ENCODE measurements at regions of chr1 and their contacts with region 1.

Region 1: GRCh38 chr1:45884700-45885099 is 81.3 kb downstream of the MAST2 start:
- DNase-seq: peak in 2 of 4 experiments; percentile 25 to 50
- ATAC-seq: peak; percentile 86
- H3K4me3 ChIP-seq: no peak overlapping the region
- H3K27ac ChIP-seq: peak overlapping the region; percentile 30; the same call in 2 of the 3 replicates
- H3K4me1 ChIP-seq: peaks cover 0 to 7% of the 10 kb centered on the region in 2 experiments; a peak in 2 of 5 replicates
- H3K27me3 ChIP-seq: no peaks in the 10 kb centered on the region
- CTCF ChIP-seq: no peak
- EP300 ChIP-seq: peak; percentile 25; the same call in 1 of the 2 replicates
- POLR2A ChIP-seq: no peak
- RAD21 ChIP-seq: no peak

Region 2: GRCh38 chr1:45512641-45513054 is 372.1 kb before region 1 on chr1:
- CTCF ChIA-PET with region 1: no interaction called
- POLR2A ChIA-PET with region 1: no interaction called
- in situ Hi-C with region 1: no loop called
- intact Hi-C with region 1: loop called (anchors 5 kb)
- DNase-seq: peak; percentile 57 to 88 (median 67)
- ATAC-seq: peak; percentile 78
- H3K4me3 ChIP-seq: no peak overlapping the region
- H3K27ac ChIP-seq: no peak overlapping the region
- H3K4me1 ChIP-seq: no peaks in the 10 kb centered on the region; a peak in 1 of 5 replicates
- H3K27me3 ChIP-seq: no peaks in the 10 kb centered on the region
- CTCF ChIP-seq: peak; percentile 84 to 89 (median 86)
- EP300 ChIP-seq: no peak
- POLR2A ChIP-seq: no peak
- RAD21 ChIP-seq: peak; percentile 87 to 95

Region 3: DNA sequence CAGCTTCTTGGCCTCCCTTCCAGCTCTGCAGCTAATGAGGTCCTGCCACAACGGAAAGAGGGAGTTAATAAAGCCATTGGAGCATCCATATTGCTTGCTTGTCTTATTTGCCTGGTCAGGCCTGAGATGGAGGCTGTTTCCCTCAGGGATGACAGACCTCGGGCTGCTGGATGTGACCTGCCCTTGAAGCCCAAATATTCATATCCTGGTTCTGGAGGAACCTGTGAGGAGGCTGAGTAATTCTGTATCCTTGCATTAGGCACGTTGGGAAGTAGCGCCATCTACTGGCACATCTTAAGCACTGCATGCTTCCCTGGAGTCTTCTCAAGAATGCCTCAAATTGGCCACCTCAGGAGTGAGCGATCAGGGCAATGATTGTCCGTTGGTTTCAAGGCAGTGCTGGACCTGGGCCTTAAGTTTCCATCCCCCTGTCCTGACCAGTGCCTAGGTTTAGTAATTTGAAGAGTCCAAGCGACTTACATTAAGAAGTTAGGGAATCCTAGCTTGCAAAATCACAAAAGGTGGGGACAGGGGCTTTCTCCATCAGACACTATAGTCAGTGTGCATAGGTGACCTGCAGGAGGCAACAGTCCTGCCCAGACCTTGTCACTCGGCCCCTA is 314.6 kb before region 1 on chr1:
- CTCF ChIA-PET with region 1: no interaction called
- POLR2A ChIA-PET with region 1: no interaction called
- in situ Hi-C with region 1: no loop called
- intact Hi-C with region 1: loop called (anchors 1 kb)
- DNase-seq: peak; percentile 67 to 86 (median 74)
- ATAC-seq: peak; percentile 87
- H3K4me3 ChIP-seq: no peak overlapping the region
- H3K27ac ChIP-seq: no peak overlapping the region
- H3K4me1 ChIP-seq: peaks cover 11 to 22% of the 10 kb centered on the region in 2 experiments
- H3K27me3 ChIP-seq: no peaks in the 10 kb centered on the region
- CTCF ChIP-seq: peak; percentile 95 to 99 (median 98)
- EP300 ChIP-seq: 0 out of 2 replicates have a peak, but pooled peaks have one; percentile 8
- POLR2A ChIP-seq: no peak
- RAD21 ChIP-seq: peak; percentile 94 to 97

Region 4: DNA sequence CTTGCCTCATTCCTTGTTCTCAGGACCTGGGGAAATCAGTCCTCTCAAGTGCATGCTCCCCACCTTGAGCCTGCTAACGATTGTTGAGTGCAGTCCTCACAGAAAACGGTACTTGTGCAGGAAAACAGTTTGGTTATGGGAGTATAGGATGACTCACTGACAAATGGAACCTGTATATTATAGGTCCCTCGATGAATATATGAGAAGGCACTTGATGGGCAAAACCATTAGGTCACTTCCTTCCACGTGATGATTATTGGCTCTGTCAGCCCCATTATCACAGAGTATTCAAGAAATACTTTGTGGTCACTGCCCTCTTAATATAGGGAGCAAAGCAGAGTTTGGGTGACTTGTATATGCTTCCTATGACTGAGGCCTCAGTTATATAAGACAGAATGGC is 267.1 kb before region 1 on chr1:
- CTCF ChIA-PET with region 1: no interaction called
- POLR2A ChIA-PET with region 1: no interaction called
- in situ Hi-C with region 1: no loop called
- intact Hi-C with region 1: loop called (anchors 2 kb)
- DNase-seq: no peak
- ATAC-seq: no peak
- H3K4me3 ChIP-seq: no peak overlapping the region
- H3K27ac ChIP-seq: no peak overlapping the region
- H3K4me1 ChIP-seq: peaks cover 0 to 10% of the 10 kb centered on the region in 2 experiments; a peak in 2 of 5 replicates
- H3K27me3 ChIP-seq: no peaks in the 10 kb centered on the region
- CTCF ChIP-seq: no peak
- EP300 ChIP-seq: no peak
- POLR2A ChIP-seq: peak; percentile 34; the same call in 1 of the 2 replicates
- RAD21 ChIP-seq: no peak

Region 5: GRCh38 chr1:45713711-45714110 is 171.0 kb before region 1 on chr1:
- CTCF ChIA-PET with region 1: no interaction called
- POLR2A ChIA-PET with region 1: no interaction called
- in situ Hi-C with region 1: no loop called
- intact Hi-C with region 1: no loop called
- DNase-seq: no peak
- ATAC-seq: no peak
- H3K4me3 ChIP-seq: no peak overlapping the region
- H3K27ac ChIP-seq: no peak overlapping the region
- H3K4me1 ChIP-seq: no peaks in the 10 kb centered on the region
- H3K27me3 ChIP-seq: no peaks in the 10 kb centered on the region
- CTCF ChIP-seq: no peak
- EP300 ChIP-seq: no peak
- POLR2A ChIP-seq: no peak
- RAD21 ChIP-seq: no peak

Region 6: DNA sequence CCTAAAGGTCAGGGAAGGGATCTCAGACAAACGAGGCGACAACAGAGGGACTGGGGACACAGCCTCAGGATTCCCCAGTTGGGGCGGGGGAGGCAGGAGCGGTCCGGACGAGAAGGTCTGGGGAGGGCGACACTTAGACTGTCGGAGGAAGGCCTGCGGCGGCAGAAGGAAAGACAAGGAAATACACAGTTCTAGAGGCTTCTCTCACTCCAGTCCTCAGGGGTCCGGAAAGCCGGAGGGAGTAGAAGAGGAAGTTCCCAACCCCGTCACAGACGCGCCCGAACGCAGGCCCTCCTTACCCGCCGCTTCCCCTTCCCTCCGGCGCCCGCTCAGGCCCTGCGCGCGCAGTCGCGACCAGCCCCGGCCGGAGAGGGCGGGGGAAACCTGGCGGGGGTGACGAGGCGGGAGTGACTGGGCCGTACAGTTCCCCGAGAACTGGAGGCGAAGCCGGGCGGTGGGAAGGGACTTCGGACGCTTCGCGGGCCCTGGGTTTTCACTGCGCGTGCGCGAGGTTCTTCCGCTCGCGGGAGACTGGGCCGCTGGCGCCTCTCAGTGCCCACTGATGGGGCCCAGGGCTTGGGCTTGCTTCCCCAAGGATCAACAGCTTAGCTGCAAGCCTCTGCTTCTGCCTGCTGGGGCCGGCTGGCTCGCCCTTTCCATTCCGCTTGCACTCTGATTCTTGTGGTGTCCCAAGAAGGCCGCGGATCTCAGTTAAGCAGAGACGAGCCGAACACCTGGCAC is 134.2 kb before region 1 on chr1 and contains the start of gene IPP:
- CTCF ChIA-PET with region 1: no interaction called
- POLR2A ChIA-PET with region 1: no interaction called
- in situ Hi-C with region 1: no loop called
- intact Hi-C with region 1: no loop called
- DNase-seq: peak; percentile 99
- ATAC-seq: peak; percentile 96
- H3K4me3 ChIP-seq: peak within 1 kb of the TSS; percentile 51
- H3K27ac ChIP-seq: peak within 1 kb of the TSS; percentile 92
- H3K4me1 ChIP-seq: peaks cover 35 to 43% of the 10 kb centered on the region in 2 experiments
- H3K27me3 ChIP-seq: no peaks in the 10 kb centered on the region
- CTCF ChIP-seq: peak; percentile 37 to 75 (median 71); a peak in 5 of 6 replicates
- EP300 ChIP-seq: peak; percentile 41; the same call in 1 of the 2 replicates
- POLR2A ChIP-seq: peak; percentile 99
- RAD21 ChIP-seq: peak; percentile 49 to 75
- polyA plus RNA-seq, gene IPP: 13.5 to 15.1 TPM

Region 7: DNA sequence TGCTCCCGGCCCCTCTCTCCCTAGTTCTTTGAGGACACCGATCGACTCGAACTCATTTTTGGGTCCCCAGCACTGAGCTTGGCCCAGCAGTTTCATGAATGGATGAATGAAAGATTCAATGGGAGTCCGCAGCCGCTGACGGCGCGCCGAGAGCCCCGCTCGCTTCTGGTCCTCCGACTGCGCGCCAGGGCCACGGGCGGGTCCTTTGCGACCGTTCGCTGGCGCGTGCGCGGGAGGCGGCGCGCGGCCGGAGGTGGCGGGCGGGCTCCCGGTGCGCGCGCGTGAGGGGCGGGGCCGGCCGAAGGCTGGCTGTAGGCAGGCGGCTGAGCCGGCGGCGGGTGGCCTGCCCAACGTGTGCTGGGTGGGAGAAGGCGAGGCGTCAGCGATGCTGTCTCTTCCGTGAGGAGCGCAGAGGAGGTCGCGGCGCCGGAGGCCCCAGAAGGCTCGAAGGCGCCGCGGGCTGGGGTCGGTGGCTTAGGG is 81.4 kb before region 1 on chr1 and contains the start of gene MAST2:
- CTCF ChIA-PET with region 1: no interaction called
- POLR2A ChIA-PET with region 1: no interaction called
- in situ Hi-C with region 1: no loop called
- intact Hi-C with region 1: no loop called
- DNase-seq: peak; percentile 96 to 98 (median 98)
- ATAC-seq: peak; percentile 91
- H3K4me3 ChIP-seq: peak within 1 kb of the TSS; percentile 69
- H3K27ac ChIP-seq: peak within 1 kb of the TSS; percentile 77
- H3K4me1 ChIP-seq: peaks cover 19 to 23% of the 10 kb centered on the region in 2 experiments
- H3K27me3 ChIP-seq: no peaks in the 10 kb centered on the region
- CTCF ChIP-seq: peak in 1 of 3 experiments; percentile 3; a peak in 1 of 6 replicates
- EP300 ChIP-seq: no peak
- POLR2A ChIP-seq: peak; percentile 83
- RAD21 ChIP-seq: no peak
- polyA plus RNA-seq, gene MAST2: 0.73 to 1.1 TPM

Region 8: DNA sequence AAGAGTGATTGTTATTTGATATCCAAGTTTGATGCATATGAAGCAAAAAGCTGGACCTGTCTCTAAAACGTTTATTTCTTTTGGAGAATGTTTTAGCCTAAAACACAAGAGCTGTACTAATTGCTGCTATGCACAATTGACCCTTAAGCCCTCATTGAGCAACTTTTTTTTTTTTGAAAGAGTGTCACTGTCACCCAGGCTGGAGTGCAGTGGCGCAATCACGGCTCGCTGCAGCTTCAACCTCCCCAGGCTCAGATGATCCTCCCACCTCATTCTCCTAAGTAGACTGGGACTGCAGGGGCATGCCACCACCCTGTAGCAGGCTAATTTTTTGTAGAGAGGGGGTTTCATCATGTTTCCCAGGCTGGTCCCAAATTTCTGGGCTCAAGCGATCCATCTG is 118.6 kb after region 1 on chr1:
- CTCF ChIA-PET with region 1: no interaction called
- POLR2A ChIA-PET with region 1: no interaction called
- in situ Hi-C with region 1: no loop called
- intact Hi-C with region 1: no loop called
- DNase-seq: no peak
- ATAC-seq: no peak
- H3K4me3 ChIP-seq: no peak overlapping the region
- H3K27ac ChIP-seq: no peak overlapping the region
- H3K4me1 ChIP-seq: peaks cover 0 to 8% of the 10 kb centered on the region in 2 experiments; a peak in 2 of 5 replicates
- H3K27me3 ChIP-seq: no peaks in the 10 kb centered on the region
- CTCF ChIP-seq: no peak
- EP300 ChIP-seq: no peak
- POLR2A ChIP-seq: no peak
- RAD21 ChIP-seq: no peak

Region 9: GRCh38 chr1:46179138-46180081 is 294.7 kb after region 1 on chr1:
- CTCF ChIA-PET with region 1: no interaction called
- POLR2A ChIA-PET with region 1: no interaction called
- in situ Hi-C with region 1: no loop called
- intact Hi-C with region 1: loop called (anchors 10 kb)
- DNase-seq: peak; percentile 91 to 92 (median 92)
- ATAC-seq: peak; percentile 95
- H3K4me3 ChIP-seq: no peak overlapping the region
- H3K27ac ChIP-seq: no peak overlapping the region
- H3K4me1 ChIP-seq: peaks cover 22 to 23% of the 10 kb centered on the region in 2 experiments
- H3K27me3 ChIP-seq: no peaks in the 10 kb centered on the region
- CTCF ChIP-seq: peak; percentile 95 to 98 (median 96)
- EP300 ChIP-seq: no peak
- POLR2A ChIP-seq: no peak
- RAD21 ChIP-seq: peak; percentile 100